HepG2 (cell line): ENCODE measurements at regions of chr7 and their contacts with region 1.

Region 1: DNA sequence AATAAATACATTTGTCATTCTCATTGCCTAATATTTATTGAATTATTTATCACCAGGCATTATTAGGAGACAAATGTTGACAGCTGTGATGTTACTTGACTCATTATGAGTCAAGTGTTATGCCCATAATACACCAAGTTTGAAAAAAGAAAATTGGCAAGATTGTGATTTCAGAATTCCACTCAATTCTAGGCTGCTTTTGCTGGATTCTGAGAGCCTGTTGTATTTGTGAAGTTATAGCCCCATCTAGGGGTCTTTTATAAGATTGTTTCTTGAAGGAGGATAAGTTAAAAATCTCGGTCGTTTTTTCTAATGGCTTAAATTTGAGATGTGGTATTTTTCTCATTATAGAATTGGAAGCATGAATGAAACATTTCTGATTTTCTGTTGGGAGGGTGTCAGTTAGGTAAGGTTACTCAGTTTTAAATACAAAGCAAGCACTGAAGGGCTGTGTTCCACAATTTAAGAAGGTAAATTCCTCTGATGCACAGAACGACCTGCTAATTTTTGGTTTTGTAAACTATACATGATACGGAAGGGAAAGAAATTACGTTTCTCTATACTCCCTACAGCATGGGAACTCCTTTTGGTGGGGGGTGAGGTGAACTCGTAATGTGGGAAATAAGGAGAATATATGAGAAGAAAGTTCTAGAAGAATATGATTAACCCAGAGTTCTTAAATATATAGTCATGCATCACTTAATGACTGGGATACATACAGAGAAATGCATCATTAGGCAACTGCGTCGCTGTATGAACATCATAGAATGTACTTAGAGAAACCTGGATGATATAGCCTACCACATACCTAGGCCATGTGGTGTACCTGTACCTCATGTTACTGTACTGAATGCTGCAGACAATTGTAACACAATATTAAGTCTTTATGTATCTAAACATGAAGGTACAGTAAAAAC is 2.6 kb downstream of the STK31 start:
- DNase-seq: peak; percentile 51
- ATAC-seq: peak; percentile 26; the same call in 1 of the 3 replicates
- H3K4me3 ChIP-seq: no peak overlapping the region
- H3K27ac ChIP-seq: no peak overlapping the region
- H3K4me1 ChIP-seq: peaks cover 14% of the 10 kb centered on the region
- H3K27me3 ChIP-seq: peaks cover 0 to 4% of the 10 kb centered on the region in 2 experiments; a peak in 3 of 5 replicates
- CTCF ChIP-seq: peak; percentile 57
- EP300 ChIP-seq: no peak
- POLR2A ChIP-seq: no peak
- RAD21 ChIP-seq: peak; percentile 52; the same call in 1 of the 2 replicates

Region 2: GRCh38 chr7:23261843-23262452 is 450.7 kb before region 1 on chr7:
- CTCF ChIA-PET with region 1: no interaction called
- POLR2A ChIA-PET with region 1: no interaction called
- in situ Hi-C with region 1: loop called (anchors 25 kb)
- intact Hi-C with region 1: loop called (anchors 2 kb)
- DNase-seq: peak; percentile 58
- ATAC-seq: peak; percentile 97
- H3K4me3 ChIP-seq: no peak overlapping the region; a peak in 1 of 6 replicates
- H3K27ac ChIP-seq: no peak overlapping the region
- H3K4me1 ChIP-seq: no peaks in the 10 kb centered on the region
- H3K27me3 ChIP-seq: peaks cover 3 to 26% of the 10 kb centered on the region in 2 experiments; a peak in 3 of 5 replicates
- CTCF ChIP-seq: peak; percentile 84
- EP300 ChIP-seq: no peak
- POLR2A ChIP-seq: no peak
- RAD21 ChIP-seq: peak; percentile 75

Region 3: GRCh38 chr7:23546897-23547572 is 165.6 kb before region 1 on chr7:
- CTCF ChIA-PET with region 1: interaction called, 37 read pairs
- POLR2A ChIA-PET with region 1: no interaction called
- in situ Hi-C with region 1: no loop called
- intact Hi-C with region 1: loop called (anchors 1 kb)
- DNase-seq: peak; percentile 87
- ATAC-seq: peak; percentile 83
- H3K4me3 ChIP-seq: no peak overlapping the region
- H3K27ac ChIP-seq: no peak overlapping the region
- H3K4me1 ChIP-seq: peaks cover 7% of the 10 kb centered on the region; the same call in 1 of the 2 replicates
- H3K27me3 ChIP-seq: peaks cover 0 to 2% of the 10 kb centered on the region in 2 experiments; a peak in 1 of 5 replicates
- CTCF ChIP-seq: peak; percentile 86
- EP300 ChIP-seq: no peak
- POLR2A ChIP-seq: no peak
- RAD21 ChIP-seq: peak; percentile 82

Region 4: DNA sequence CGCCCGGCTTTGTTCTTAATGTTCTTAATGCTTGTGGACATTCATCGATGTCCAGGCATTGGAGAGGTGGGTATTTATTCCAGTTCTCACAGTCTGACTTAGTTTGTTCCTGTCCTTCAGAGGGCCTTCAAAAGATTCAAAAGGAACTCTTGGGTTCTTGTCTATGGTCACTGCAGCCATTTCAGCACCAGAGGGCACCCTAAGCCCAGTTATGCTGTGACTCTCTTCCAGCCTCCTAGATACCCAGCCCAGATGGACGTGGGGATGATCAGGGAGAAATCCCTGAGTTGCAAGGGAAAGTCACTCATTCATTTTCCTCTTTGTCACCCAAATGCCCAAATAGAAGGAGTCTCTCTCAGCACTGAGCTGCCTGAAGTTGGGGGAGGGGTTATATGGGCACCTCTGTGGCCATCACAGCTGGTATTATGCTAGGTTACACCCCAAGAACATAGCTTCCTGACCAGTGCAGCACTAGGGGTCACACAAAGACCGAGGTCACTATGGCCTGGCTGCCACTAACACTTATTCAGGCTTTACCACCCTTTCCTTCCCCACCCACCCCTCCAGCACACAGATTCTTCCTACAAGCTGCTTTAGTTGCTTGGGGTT is 141.9 kb before region 1 on chr7:
- CTCF ChIA-PET with region 1: interaction called, 45 read pairs
- POLR2A ChIA-PET with region 1: no interaction called
- in situ Hi-C with region 1: loop called (anchors 5 kb)
- intact Hi-C with region 1: loop called (anchors 1 kb)
- DNase-seq: peak; percentile 62
- ATAC-seq: peak; percentile 98
- H3K4me3 ChIP-seq: no peak overlapping the region
- H3K27ac ChIP-seq: no peak overlapping the region
- H3K4me1 ChIP-seq: no peaks in the 10 kb centered on the region
- H3K27me3 ChIP-seq: peaks cover 0 to under 1% of the 10 kb centered on the region in 2 experiments; a peak in 2 of 5 replicates
- CTCF ChIP-seq: peak; percentile 94
- EP300 ChIP-seq: no peak
- POLR2A ChIP-seq: no peak
- RAD21 ChIP-seq: peak; percentile 94

Region 5: GRCh38 chr7:23654508-23654907 is 58.1 kb before region 1 on chr7:
- CTCF ChIA-PET with region 1: no interaction called
- POLR2A ChIA-PET with region 1: no interaction called
- in situ Hi-C with region 1: no loop called
- intact Hi-C with region 1: loop called (anchors 1 kb)
- DNase-seq: peak; percentile 15
- ATAC-seq: peak; percentile 62
- H3K4me3 ChIP-seq: no peak overlapping the region
- H3K27ac ChIP-seq: no peak overlapping the region
- H3K4me1 ChIP-seq: no peaks in the 10 kb centered on the region
- H3K27me3 ChIP-seq: peaks cover 0 to 3% of the 10 kb centered on the region in 2 experiments; a peak in 2 of 5 replicates
- CTCF ChIP-seq: peak; percentile 34
- EP300 ChIP-seq: no peak
- POLR2A ChIP-seq: no peak
- RAD21 ChIP-seq: peak; percentile 21; the same call in 1 of the 2 replicates

Region 6: DNA sequence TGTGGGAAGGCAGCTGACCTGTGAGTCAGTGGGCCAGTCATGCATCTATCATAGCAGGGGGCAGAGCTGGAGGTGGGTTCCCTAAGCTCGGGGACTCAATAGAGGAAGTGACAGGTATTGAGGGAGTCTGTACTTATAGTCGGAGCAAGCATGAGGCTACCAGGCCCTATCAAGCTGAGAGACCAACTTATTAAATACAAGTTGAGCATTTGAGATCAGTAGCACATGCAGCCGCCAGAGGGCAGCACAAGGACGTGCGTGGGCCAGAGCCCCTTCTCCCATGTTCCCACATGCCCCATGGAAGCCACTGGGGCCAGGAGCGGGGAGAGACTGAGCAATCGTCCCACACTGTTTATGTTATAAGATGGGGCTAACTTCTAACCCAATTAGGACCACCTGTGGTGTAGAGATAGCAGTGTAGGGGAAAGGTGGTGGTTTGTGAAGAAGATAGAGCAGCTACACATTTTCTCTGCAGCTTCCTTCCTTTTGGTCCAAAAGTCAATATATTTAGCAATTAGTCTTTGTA is 15.6 kb before region 1 on chr7:
- CTCF ChIA-PET with region 1: interaction called, 17 read pairs
- POLR2A ChIA-PET with region 1: no interaction called
- in situ Hi-C with region 1: no loop called
- intact Hi-C with region 1: no loop called
- DNase-seq: peak; percentile 58
- ATAC-seq: peak; percentile 97
- H3K4me3 ChIP-seq: no peak overlapping the region
- H3K27ac ChIP-seq: no peak overlapping the region
- H3K4me1 ChIP-seq: no peaks in the 10 kb centered on the region
- H3K27me3 ChIP-seq: no peaks in the 10 kb centered on the region
- CTCF ChIP-seq: peak; percentile 81
- EP300 ChIP-seq: no peak
- POLR2A ChIP-seq: no peak
- RAD21 ChIP-seq: peak; percentile 68